B cell (primary cell): ENCODE measurements at regions of chr5 and their contacts with region 1.

Region 1: DNA sequence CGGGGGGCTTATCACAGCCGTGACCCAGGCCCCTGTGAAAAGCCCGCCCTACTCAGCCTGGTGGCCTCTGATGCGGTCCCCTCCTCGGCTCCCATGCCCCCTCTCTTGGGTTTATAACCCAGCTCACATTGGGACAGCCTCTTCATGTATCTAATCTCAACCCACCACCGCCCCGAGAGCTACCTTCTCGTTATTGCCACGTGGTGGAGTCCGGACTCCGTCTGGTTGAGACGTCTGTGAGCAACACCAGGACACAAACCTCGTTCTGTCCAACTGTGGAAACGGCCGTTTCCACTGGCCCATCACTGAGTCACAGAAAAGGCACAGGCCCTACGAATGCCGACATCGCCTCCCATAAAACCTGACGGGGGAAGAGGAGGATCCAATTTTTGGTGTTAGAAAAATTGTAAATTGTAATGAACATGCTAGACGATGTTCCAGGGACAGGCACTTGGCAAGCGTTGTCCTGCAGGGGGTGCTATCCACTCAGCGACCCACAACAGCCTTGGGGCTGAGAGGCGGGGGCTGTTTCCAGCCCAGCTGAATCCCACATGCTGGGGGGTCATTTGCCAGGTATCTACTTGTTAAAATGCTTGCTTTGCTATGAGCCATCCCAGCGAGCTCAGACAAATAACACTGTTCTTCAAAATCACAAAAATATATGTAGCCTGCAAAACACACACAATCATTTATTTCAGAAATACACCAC is 37.3 kb upstream of the N4BP3 start:
- DNase-seq: peak; percentile 88
- ATAC-seq: peak; percentile 94
- H3K4me3 ChIP-seq: peak overlapping the region in 1 of 5 experiments; percentile 23
- H3K4me3 Mint-ChIP-seq: peak overlapping the region; percentile 74
- H3K27ac ChIP-seq: no peak overlapping the region
- H3K27ac Mint-ChIP-seq: no peak overlapping the region
- H3K4me1 ChIP-seq: peaks cover 0 to 8% of the 10 kb centered on the region in 2 donors
- H3K4me1 Mint-ChIP-seq: peaks cover 6% of the 10 kb centered on the region
- H3K27me3 ChIP-seq: peaks cover 0 to 26% (median 8%) of the 10 kb centered on the region in 4 experiments
- H3K27me3 Mint-ChIP-seq: peaks cover 14% of the 10 kb centered on the region
- CTCF ChIP-seq: peak; percentile 99

Region 2: DNA sequence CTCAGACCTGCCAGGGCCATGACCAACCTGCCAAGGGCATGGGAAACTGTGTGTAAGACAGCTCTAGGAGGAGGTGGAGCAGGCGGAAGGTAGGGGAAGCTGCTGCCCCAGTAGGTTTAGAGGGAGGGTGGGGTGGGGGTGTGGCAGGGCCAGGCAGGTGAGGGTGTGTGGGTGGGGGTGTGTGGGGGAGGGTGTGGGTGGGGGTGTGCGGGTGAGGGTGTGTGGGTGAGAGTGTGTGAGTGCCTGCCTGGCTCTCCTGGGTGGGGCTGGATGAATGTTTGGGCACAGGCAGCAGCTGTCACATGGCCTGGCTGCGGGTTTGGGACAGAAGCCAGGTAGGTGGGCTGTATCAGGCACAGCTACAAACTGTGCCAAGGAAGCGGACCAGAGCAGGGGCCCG is 28.5 kb after region 1 on chr5:
- CTCF ChIA-PET with region 1: interaction called, 15 read pairs
- POLR2A ChIA-PET with region 1: no interaction called
- intact Hi-C with region 1: no loop called
- DNase-seq: no peak
- ATAC-seq: no peak
- H3K4me3 ChIP-seq: no peak overlapping the region
- H3K4me3 Mint-ChIP-seq: no peak overlapping the region
- H3K27ac ChIP-seq: no peak overlapping the region
- H3K27ac Mint-ChIP-seq: no peak overlapping the region
- H3K4me1 ChIP-seq: peaks cover 16 to 28% of the 10 kb centered on the region in 2 donors
- H3K4me1 Mint-ChIP-seq: peaks cover 31% of the 10 kb centered on the region
- H3K27me3 ChIP-seq: no peaks in the 10 kb centered on the region
- H3K27me3 Mint-ChIP-seq: no peaks in the 10 kb centered on the region
- CTCF ChIP-seq: no peak

Region 3: GRCh38 chr5:178120868-178121357 is 44.9 kb after region 1 on chr5:
- CTCF ChIA-PET with region 1: interaction called, 92 read pairs
- POLR2A ChIA-PET with region 1: no interaction called
- intact Hi-C with region 1: no loop called
- DNase-seq: peak; percentile 88
- ATAC-seq: peak; percentile 50
- H3K4me3 ChIP-seq: peak overlapping the region in 4 of 5 experiments; percentile 18 to 34 (median 32)
- H3K4me3 Mint-ChIP-seq: peak overlapping the region; percentile 82
- H3K27ac ChIP-seq: peak overlapping the region in 1 of 2 donors; percentile 26
- H3K27ac Mint-ChIP-seq: peak overlapping the region; percentile 88
- H3K4me1 ChIP-seq: peaks cover 65 to 68% of the 10 kb centered on the region in 2 donors
- H3K4me1 Mint-ChIP-seq: peaks cover 68% of the 10 kb centered on the region
- H3K27me3 ChIP-seq: no peaks in the 10 kb centered on the region
- H3K27me3 Mint-ChIP-seq: no peaks in the 10 kb centered on the region
- CTCF ChIP-seq: peak; percentile 80

Region 4: DNA sequence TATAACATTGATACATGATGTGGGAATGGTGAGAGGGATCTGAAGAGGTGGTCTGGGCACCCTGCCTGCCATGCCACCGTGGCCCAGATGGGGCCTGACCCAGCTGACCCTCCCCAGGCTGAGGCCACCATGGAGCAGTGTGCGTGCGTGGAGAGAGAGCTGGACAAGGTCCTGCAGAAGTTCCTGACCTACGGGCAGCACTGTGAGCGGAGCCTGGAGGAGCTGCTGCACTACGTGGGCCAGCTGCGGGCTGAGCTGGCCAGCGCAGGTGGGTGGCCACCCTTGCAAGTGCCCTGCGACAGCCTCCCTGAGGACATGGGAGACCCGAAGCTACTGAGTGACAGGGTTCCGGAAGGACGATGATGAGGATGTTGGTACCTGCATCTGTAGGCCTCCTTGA is 62.0 kb after region 1 on chr5:
- CTCF ChIA-PET with region 1: interaction called, 540 read pairs
- POLR2A ChIA-PET with region 1: no interaction called
- intact Hi-C with region 1: no loop called
- DNase-seq: no peak
- ATAC-seq: no peak
- H3K4me3 ChIP-seq: no peak overlapping the region
- H3K4me3 Mint-ChIP-seq: no peak overlapping the region
- H3K27ac ChIP-seq: no peak overlapping the region
- H3K27ac Mint-ChIP-seq: no peak overlapping the region
- H3K4me1 ChIP-seq: no peaks in the 10 kb centered on the region
- H3K4me1 Mint-ChIP-seq: peaks cover 8% of the 10 kb centered on the region
- H3K27me3 ChIP-seq: no peaks in the 10 kb centered on the region
- H3K27me3 Mint-ChIP-seq: no peaks in the 10 kb centered on the region
- CTCF ChIP-seq: no peak

Region 5: GRCh38 chr5:178163772-178164735 is 88.1 kb after region 1 on chr5:
- CTCF ChIA-PET with region 1: interaction called, 540 read pairs
- POLR2A ChIA-PET with region 1: interaction called, 5 read pairs
- intact Hi-C with region 1: loop called (anchors 1 kb)
- DNase-seq: peak; percentile 94
- ATAC-seq: peak; percentile 100
- H3K4me3 ChIP-seq: peak overlapping the region in 1 of 5 experiments; percentile 14
- H3K4me3 Mint-ChIP-seq: peak overlapping the region; percentile 17
- H3K27ac ChIP-seq: no peak overlapping the region
- H3K27ac Mint-ChIP-seq: peak overlapping the region; percentile 4
- H3K4me1 ChIP-seq: peaks cover 5 to 9% of the 10 kb centered on the region in 2 donors
- H3K4me1 Mint-ChIP-seq: peaks cover 16% of the 10 kb centered on the region
- H3K27me3 ChIP-seq: no peaks in the 10 kb centered on the region
- H3K27me3 Mint-ChIP-seq: peaks cover 11% of the 10 kb centered on the region
- CTCF ChIP-seq: peak; percentile 94

Region 6: DNA sequence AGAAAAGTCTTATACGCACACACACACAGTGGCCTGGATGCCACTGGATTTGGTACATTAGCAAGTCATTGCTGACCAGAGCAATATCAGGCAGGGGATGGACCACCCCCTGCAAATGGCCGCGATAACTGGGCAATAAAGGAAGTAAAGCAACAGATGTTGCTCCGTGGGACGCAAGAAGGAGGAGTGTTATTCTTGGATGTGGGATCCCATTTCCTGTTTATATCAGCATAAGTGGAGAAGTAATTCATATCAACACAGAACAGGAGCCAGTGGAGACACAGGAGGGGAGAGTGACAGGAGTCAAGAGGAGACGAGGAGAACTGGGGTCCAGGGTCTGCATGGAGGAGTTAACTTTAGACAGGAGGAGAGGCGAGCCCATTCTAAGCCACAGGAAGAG is 1492.7 kb after region 1 on chr5:
- CTCF ChIA-PET with region 1: no interaction called
- POLR2A ChIA-PET with region 1: no interaction called
- intact Hi-C with region 1: no loop called
- DNase-seq: no peak
- ATAC-seq: no peak
- H3K4me3 ChIP-seq: no peak overlapping the region
- H3K4me3 Mint-ChIP-seq: no peak overlapping the region
- H3K27ac ChIP-seq: peak overlapping the region in 1 of 2 donors; percentile 65
- H3K27ac Mint-ChIP-seq: peak overlapping the region; percentile 43
- H3K4me1 ChIP-seq: no peaks in the 10 kb centered on the region
- H3K4me1 Mint-ChIP-seq: no peaks in the 10 kb centered on the region
- H3K27me3 ChIP-seq: no peaks in the 10 kb centered on the region
- H3K27me3 Mint-ChIP-seq: no peaks in the 10 kb centered on the region
- CTCF ChIP-seq: no peak